Heart right ventricle (tissue), 16 donors: ENCODE measurements at regions of chr6 and their contacts with region 1.

Region 1: DNA sequence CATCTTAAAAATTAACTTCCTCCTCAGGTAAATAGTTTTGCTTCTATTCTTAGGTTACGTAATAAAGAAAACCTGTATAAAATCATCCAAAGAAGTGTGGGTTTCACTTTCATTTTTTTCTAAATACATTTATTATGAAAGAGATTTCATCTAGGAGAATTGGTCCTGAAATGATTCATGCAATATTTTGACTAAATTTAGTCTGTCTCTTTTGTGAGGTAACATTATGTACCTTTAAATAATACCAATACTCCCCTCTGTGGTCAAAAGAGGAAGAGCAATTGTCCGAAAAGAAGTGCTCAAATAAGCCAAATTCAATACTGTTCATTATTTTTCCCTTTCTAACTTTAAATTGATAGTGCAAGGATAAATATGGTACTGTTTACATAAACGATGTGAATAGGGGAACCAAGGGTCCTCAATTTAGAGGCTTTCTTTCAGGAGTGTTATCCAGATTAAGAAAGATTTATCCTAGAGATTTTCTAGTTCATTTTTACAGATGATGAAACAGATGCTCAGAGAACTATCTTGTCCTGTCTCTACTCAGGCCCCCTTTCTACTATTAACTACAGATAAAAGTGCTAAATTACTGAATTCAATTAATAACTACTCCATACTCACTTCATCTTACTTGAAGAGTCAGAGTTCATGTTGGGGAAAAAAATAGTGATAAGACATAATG is 26.2 kb downstream of the CYP39A1 start:
- DNase-seq: peak in 1 of 2 donors; percentile 23
- ATAC-seq: peak in 4 of 8 donors; percentile 43 to 69 (median 56)
- H3K4me3 ChIP-seq: no peak overlapping the region
- H3K27ac ChIP-seq: peak overlapping the region in 1 of 10 donors; percentile 1
- H3K4me1 ChIP-seq: peaks cover 0 to 18% (median 8%) of the 10 kb centered on the region in 9 donors
- H3K27me3 ChIP-seq: no peaks in the 10 kb centered on the region
- CTCF ChIP-seq: peak; percentile 24 to 83 (median 65)

Region 2: DNA sequence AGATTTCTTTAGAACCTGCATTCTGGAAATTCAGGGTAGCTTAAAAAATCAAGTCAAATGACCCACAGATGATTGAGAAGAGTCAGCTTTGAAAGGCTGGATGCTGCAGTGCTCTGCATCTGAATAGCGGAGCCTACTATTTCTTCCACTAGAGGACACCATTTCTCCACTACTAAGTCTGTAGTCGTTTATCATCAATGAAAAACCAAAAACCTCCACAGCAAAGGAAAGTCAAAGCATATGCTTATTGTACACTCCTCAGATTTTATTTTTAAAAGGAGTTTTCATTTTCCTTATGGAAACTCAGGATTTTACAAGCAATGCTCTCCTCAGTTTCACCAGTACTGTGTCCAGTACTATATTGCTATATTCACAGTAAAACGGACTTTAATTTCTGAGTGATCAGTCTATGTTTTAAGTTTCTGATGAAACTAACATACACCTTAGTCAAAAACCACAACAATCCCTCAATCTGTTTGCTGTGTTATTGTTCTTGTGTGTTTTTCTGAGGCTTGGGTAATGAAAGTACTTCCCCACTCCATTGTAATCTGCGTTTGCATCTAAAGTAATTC is 405.1 kb before region 1 on chr6:
- intact Hi-C with region 1: loop called in 7 of 10 experiments (anchors 5 to 10 kb)
- DNase-seq: no peak
- ATAC-seq: peak in 7 of 8 donors; percentile 60 to 81 (median 70)
- H3K4me3 ChIP-seq: no peak overlapping the region
- H3K27ac ChIP-seq: no peak overlapping the region
- H3K4me1 ChIP-seq: peaks cover 0 to 39% (median 11%) of the 10 kb centered on the region in 9 donors
- H3K27me3 ChIP-seq: no peaks in the 10 kb centered on the region
- CTCF ChIP-seq: peak; percentile 60 to 91 (median 83)

Region 3: DNA sequence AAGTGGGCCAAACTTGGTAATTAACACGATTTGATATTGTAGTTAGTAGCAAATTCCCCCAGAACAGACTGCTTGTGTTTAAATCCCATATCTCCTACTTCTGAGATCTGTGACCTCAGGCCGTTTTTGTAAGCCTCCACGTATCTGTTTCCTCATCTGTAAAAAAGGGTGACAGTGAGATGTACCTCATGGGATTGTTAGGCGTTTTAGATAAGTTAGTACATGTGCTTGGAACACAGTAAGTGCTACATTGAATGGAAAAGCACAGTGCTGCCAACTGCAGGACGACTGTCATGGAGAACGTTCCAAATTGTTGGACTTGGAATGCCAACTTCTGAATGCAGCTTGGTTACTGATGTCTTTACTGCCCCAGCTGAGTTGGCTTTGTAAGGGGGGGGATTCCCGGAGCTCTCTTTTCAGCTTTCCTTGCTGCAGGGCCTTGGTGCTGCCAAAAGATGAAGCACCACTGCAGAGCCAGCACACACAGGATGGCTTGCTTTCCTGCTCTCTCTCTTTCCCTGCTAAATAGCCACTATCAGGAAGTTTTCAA is 1264.0 kb after region 1 on chr6:
- intact Hi-C with region 1: loop called in 1 of 10 experiments (anchors 5 kb)
- DNase-seq: no peak
- ATAC-seq: no peak
- H3K4me3 ChIP-seq: no peak overlapping the region
- H3K27ac ChIP-seq: no peak overlapping the region
- H3K4me1 ChIP-seq: no peaks in the 10 kb centered on the region
- H3K27me3 ChIP-seq: no peaks in the 10 kb centered on the region
- CTCF ChIP-seq: no peak